AG04450 (cell line): ENCODE measurements at regions of chr1 and their contacts with region 1.

Region 1: DNA sequence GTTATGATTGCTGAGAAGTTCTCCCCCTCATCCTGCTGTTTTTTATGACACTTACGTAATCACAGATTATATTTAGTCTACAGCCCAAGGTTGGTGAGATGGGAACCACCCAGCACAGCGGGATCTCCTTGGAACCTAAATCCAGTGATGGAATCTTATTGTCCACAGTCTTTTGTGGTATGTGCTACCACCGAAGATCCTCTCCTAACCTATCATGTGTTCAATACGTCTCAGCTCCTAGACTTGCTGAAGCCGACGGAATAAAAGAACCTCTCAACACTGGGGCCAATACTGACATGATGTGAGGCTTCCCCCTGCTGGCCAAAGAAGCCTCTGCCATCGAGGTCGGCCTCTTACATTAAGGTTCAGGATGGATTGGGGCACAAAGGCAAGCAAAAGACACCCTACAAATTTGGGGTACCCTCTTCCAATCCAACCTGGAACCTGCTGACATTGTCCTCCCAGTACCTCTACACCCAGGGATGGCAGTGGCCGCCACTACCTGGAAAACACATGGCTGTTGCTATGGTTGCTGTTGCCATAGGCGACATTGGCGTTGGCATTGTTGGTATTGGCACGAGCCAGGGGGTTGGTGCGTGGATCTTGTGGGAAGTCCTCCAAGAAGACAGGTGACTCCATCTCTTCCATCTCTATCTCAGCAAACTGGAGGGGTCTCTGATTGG is 19.4 kb upstream of the KIF21B start:
- DNase-seq: peak; percentile 47
- H3K4me3 ChIP-seq: no peak overlapping the region
- H3K27ac ChIP-seq: no peak overlapping the region
- H3K27me3 ChIP-seq: peaks cover 13% of the 10 kb centered on the region
- CTCF ChIP-seq: peak; percentile 90

Region 2: DNA sequence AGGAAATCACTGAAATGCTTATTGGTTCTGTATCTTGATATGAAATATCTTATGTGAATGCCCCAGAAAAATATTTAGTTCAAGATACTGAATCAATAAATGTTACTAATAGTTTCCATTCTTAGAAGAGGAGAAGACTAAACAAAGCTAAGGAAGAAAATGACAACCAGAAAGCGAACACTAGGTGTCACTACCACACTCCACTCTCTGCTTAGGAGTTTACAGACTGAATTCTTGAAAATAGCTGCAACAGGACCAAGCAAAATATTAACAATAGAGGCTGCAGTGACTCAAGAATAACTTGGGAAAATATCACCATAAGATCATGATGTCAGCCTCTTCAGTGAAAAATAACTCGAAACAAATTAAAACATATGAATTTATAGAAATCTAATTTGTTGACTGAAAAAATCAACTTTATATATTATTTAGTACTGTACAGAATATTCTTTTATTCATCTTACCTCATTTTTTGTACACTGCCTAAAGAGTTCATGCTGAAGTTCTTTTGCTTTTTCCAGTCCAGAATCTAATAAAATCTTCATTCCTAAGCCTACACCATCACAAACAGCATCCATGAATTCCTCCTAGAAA is 484.0 kb before region 1 on chr1:
- CTCF ChIA-PET with region 1: interaction called, 18 read pairs
- POLR2A ChIA-PET with region 1: no interaction called
- DNase-seq: peak; percentile 41
- H3K4me3 ChIP-seq: no peak overlapping the region
- H3K27ac ChIP-seq: no peak overlapping the region
- H3K27me3 ChIP-seq: no peaks in the 10 kb centered on the region
- CTCF ChIP-seq: peak; percentile 76

Region 3: GRCh38 chr1:200890818-200891773 is 151.8 kb before region 1 on chr1:
- CTCF ChIA-PET with region 1: interaction called, 12 read pairs
- POLR2A ChIA-PET with region 1: no interaction called
- DNase-seq: no peak
- H3K4me3 ChIP-seq: peak overlapping the region; percentile 53
- H3K27ac ChIP-seq: no peak overlapping the region
- H3K27me3 ChIP-seq: peaks cover 78% of the 10 kb centered on the region
- CTCF ChIP-seq: peak; percentile 53

Region 4: DNA sequence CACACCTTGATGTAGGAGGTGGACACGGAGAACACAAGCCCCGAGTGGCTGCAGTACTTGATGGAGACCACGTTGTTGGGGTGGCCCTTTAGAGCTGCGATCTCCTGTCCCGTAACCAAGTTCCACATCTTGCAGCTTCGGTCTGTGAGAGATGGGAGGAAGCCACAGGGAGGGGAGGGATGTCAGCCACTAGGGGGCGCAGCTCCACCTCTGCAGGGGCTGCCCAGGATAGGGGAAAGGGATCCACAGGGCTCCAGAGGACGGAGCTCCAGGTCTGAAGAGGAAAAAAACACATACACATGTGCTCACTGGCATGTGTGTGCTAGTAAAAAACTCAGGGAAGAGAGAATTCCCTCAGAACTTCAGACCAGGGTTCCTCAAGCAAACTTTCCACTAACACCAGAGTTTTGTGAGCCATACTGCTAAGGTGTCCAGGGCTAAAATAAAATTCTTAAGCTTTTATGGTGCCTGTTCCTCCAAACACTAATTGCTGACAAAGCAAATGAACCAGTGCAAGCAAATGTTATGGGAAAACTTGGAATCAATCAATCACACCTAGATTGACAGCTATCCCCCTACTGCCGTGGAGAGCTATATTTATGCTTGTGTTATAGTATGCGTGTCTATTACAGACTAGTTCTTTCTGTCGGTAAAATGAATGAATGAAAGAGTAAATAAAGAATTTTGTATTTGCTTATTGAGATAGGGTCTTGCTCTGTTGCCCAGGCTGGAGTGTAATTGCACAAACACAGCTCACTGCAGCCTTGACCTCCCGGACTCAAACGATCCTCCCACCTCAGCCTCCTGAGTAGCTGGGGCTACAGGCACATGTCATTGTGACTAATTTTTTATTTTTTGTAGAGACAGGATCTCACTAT is 63.1 kb before region 1 on chr1:
- CTCF ChIA-PET with region 1: interaction called, 29 read pairs
- POLR2A ChIA-PET with region 1: no interaction called
- DNase-seq: no peak
- H3K4me3 ChIP-seq: no peak overlapping the region
- H3K27ac ChIP-seq: no peak overlapping the region
- H3K27me3 ChIP-seq: no peaks in the 10 kb centered on the region
- CTCF ChIP-seq: peak; percentile 46; the same call in 1 of the 2 replicates

Region 5: DNA sequence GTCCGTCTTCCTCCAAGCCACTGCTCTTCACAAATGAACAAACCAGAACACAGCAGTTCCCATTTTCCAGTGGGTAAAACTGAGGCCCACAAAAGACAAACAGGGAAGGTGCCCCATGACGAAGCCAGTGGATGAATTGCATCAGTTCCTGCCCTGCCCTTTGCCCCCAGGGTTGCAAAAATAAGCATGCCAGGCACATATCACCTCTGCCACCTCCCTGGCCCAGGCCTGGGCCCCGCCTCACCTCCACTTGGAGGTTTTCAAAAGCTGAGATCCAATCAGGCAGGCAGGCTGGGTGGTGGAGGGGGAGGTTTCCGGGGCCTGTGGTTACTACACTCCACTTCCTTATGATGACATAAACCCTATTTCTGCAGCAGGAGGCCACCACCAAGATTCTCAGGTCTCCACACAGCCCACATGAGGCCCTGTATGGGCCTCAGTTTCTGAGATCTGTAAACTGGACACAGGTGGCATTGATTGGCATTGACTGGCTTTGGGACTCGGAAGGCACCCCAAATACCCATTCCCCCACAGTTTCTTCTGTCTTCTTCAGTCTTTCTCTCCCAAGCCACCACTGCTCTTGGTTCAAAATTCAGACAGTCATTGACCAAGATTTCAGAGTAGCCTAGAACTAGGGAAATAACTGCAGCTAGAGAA is 23.5 kb before region 1 on chr1:
- CTCF ChIA-PET with region 1: interaction called, 11 read pairs
- POLR2A ChIA-PET with region 1: interaction called, 3 read pairs
- DNase-seq: no peak
- H3K4me3 ChIP-seq: no peak overlapping the region
- H3K27ac ChIP-seq: no peak overlapping the region
- H3K27me3 ChIP-seq: peaks cover 23% of the 10 kb centered on the region
- CTCF ChIP-seq: no peak

Region 6: GRCh38 chr1:201025571-201026009 is 17.3 kb before region 1 on chr1:
- CTCF ChIA-PET with region 1: interaction called, 11 read pairs
- POLR2A ChIA-PET with region 1: interaction called, 3 read pairs
- DNase-seq: no peak
- H3K4me3 ChIP-seq: no peak overlapping the region
- H3K27ac ChIP-seq: no peak overlapping the region
- H3K27me3 ChIP-seq: peaks cover 11% of the 10 kb centered on the region
- CTCF ChIP-seq: peak; percentile 45